K562 (cell line): ENCODE measurements at regions of chr2 and their contacts with region 1.

Region 1: DNA sequence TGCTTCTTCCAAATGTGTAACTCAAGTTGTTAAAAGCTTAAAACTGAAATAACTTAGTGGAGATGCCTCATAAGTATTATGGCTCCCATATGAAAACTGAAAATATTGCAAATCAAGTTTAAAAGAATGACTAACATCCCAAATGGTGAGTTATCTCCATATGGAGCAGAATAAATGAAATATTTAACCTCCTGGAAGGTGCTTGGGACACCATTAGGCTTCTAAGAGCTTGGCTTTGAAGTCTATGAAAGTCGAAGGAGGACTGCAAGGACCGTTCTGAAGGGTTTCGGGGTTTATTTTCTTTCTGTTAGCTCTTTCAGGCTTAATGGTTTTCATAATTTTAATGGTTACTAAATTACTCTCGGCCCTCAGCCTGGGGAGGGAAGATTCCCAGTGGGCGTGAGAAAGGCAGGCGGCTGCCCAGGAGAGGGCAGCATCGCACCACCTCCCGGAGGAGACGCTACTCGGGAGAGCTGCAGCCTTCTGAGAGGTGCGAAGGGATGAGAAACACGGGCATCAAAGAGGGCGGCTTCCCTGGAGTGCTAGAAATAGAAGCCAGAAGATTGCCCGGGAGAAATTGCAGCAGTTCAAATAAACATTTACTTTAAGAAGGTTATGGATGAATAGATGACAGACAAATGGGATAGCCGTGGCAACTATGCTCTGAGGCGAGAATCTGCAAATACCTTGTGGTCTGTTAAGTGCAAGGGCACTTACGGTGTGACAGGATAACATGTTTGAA is 43.1 kb downstream of the MAP3K19 start:
- DNase-seq: peak; percentile 77 to 82 (median 81)
- ATAC-seq: peak; percentile 99
- H3K4me3 ChIP-seq: no peak overlapping the region
- H3K27ac ChIP-seq: no peak overlapping the region
- H3K4me1 ChIP-seq: peaks cover 0 to 8% of the 10 kb centered on the region in 2 experiments; a peak in 2 of 5 replicates
- H3K27me3 ChIP-seq: no peaks in the 10 kb centered on the region
- CTCF ChIP-seq: peak; percentile 91 to 96 (median 92)
- EP300 ChIP-seq: no peak
- POLR2A ChIP-seq: no peak
- RAD21 ChIP-seq: peak; percentile 93 to 96

Region 2: DNA sequence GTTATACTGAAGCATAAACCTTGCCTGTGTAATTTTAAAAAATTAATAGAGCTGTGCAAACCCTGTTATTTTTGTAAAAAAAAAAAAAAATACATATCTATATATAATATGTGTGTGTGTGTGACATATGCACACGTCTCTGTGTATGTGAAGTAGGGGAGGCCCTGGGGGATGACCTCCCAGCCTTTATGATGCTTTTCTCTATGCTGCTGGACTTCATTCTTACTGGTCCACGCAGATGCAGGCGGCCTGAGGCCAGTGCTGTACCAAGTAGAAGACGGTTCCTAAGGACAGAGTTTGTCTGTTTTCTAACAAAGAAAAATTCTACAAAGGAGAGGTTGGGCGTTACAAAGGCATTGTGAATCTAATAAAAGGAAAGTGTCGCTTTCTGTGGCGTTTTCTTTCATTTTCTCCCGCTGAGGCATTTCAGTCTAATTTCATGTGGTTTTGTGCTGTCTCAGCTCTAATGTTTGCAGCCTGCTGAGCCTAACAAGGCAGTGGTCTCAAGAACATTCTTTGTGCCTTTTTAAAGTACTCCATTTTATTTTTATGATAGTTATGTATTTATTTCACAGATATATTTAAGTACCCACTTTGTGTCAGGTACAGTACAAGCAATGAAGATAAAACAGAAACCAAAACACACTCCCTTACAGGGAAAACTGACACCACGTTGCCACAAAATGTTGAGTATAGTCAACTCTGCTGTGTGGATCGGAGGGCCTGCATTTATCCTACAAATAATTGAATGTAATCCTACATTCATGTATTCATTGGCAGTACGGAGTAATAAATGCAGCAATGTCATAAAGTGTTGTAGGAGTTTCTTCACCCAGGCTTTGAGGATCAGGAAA is 166.0 kb after region 1 on chr2:
- CTCF ChIA-PET with region 1: no interaction called
- POLR2A ChIA-PET with region 1: no interaction called
- in situ Hi-C with region 1: no loop called
- intact Hi-C with region 1: loop called (anchors 10 kb)
- DNase-seq: no peak
- ATAC-seq: no peak
- H3K4me3 ChIP-seq: no peak overlapping the region
- H3K27ac ChIP-seq: no peak overlapping the region
- H3K4me1 ChIP-seq: no peaks in the 10 kb centered on the region
- H3K27me3 ChIP-seq: no peaks in the 10 kb centered on the region
- CTCF ChIP-seq: no peak
- EP300 ChIP-seq: no peak
- POLR2A ChIP-seq: no peak
- RAD21 ChIP-seq: no peak

Region 3: DNA sequence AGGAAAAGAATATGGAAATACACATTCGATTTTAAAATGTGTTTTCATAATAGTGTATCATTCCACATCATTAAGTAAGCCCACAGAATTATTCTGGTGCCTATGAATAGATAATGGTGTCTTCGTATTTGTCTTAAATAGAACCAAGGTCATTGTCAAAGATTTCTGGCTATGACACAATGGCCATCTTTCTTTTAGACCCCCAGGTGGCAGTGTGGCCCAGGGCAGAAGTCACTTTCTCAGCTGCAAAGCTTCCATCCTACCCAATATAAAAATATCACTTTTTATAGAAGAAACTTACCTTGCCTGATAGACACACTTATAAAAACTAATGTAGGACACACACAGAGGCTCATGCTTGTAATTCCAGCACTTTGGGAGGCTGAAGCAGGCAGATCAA is 469.4 kb after region 1 on chr2:
- CTCF ChIA-PET with region 1: no interaction called
- POLR2A ChIA-PET with region 1: no interaction called
- in situ Hi-C with region 1: no loop called
- intact Hi-C with region 1: loop called (anchors 10 kb)
- DNase-seq: peak; percentile 17 to 42 (median 28)
- ATAC-seq: peak; percentile 91
- H3K4me3 ChIP-seq: no peak overlapping the region
- H3K27ac ChIP-seq: no peak overlapping the region
- H3K4me1 ChIP-seq: no peaks in the 10 kb centered on the region
- H3K27me3 ChIP-seq: no peaks in the 10 kb centered on the region
- CTCF ChIP-seq: peak; percentile 51 to 76 (median 64)
- EP300 ChIP-seq: no peak
- POLR2A ChIP-seq: no peak
- RAD21 ChIP-seq: peak; percentile 37 to 70; a peak in 3 of 4 replicates

Region 4: GRCh38 chr2:135600915-135601314 is 596.7 kb after region 1 on chr2:
- CTCF ChIA-PET with region 1: interaction called, 13 read pairs
- POLR2A ChIA-PET with region 1: no interaction called
- in situ Hi-C with region 1: no loop called
- intact Hi-C with region 1: loop called (anchors 5 kb)
- DNase-seq: no peak
- ATAC-seq: no peak
- H3K4me3 ChIP-seq: no peak overlapping the region
- H3K27ac ChIP-seq: no peak overlapping the region
- H3K4me1 ChIP-seq: no peaks in the 10 kb centered on the region
- H3K27me3 ChIP-seq: no peaks in the 10 kb centered on the region
- CTCF ChIP-seq: peak in 2 of 3 experiments; percentile 5 to 49; a peak in 3 of 6 replicates
- EP300 ChIP-seq: no peak
- POLR2A ChIP-seq: no peak
- RAD21 ChIP-seq: peak; percentile 51 to 55

Region 5: DNA sequence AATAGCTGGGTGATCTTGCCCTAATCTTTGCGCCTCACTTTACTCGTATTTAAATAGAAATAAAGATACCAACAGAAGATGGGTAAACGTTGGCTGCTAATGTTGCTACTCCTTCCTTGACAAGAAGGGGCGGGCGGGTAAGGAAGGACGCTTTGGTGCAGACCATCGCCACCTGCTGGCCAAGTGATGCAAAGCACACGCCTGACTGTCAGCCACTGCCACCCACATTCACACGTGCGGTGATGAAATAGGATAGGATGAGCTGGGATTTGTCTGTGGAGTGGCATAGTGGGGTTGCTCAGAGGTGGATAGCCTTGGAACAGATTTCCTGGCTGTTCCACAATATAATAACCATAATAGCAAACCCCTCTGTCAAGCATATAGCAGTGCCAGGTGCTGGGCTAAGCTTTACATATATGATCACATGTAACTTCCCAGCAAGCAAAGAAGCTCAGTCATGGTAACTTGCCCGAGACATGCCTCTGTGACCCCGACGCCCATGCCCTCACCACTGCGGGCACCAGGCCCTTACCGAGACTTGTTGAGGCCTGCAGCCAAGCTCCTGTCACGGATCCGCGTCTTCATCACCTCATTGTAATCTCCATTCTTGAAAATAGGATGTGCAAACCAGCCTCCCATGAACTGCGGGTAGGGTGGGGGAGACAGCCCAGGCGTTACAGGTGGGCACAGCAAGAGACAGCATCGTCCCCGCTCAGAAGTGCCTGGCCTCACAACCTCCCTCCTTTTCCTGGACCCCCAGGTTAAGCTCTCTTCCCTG is 793.5 kb after region 1 on chr2:
- CTCF ChIA-PET with region 1: no interaction called
- POLR2A ChIA-PET with region 1: no interaction called
- in situ Hi-C with region 1: loop called (anchors 10 kb)
- intact Hi-C with region 1: loop called (anchors 1 kb)
- DNase-seq: peak; percentile 81 to 86 (median 82)
- ATAC-seq: peak; percentile 94
- H3K4me3 ChIP-seq: no peak overlapping the region
- H3K27ac ChIP-seq: no peak overlapping the region
- H3K4me1 ChIP-seq: no peaks in the 10 kb centered on the region; a peak in 2 of 5 replicates
- H3K27me3 ChIP-seq: no peaks in the 10 kb centered on the region
- CTCF ChIP-seq: peak; percentile 94 to 97 (median 96)
- EP300 ChIP-seq: no peak
- POLR2A ChIP-seq: no peak
- RAD21 ChIP-seq: peak; percentile 48 to 77